Activated naive CD4-positive, alpha-beta T cell treated with anti-CD3 and anti-CD28 coated beads for 36 hours (primary cell): ENCODE measurements at regions of chr19 and their contacts with region 1.

Region 1: GRCh38 chr19:1020868-1021425 is at the start of gene TMEM259:
- DNase-seq: peak; percentile 98
- H3K4me3 Mint-ChIP-seq: peak within 1 kb of the TSS; percentile 95
- H3K27ac Mint-ChIP-seq: peak within 1 kb of the TSS; percentile 98
- H3K4me1 Mint-ChIP-seq: peaks cover 41% of the 10 kb centered on the region
- H3K27me3 Mint-ChIP-seq: no peaks in the 10 kb centered on the region
- total RNA-seq, gene TMEM259: 105 to 109 TPM

Region 2: DNA sequence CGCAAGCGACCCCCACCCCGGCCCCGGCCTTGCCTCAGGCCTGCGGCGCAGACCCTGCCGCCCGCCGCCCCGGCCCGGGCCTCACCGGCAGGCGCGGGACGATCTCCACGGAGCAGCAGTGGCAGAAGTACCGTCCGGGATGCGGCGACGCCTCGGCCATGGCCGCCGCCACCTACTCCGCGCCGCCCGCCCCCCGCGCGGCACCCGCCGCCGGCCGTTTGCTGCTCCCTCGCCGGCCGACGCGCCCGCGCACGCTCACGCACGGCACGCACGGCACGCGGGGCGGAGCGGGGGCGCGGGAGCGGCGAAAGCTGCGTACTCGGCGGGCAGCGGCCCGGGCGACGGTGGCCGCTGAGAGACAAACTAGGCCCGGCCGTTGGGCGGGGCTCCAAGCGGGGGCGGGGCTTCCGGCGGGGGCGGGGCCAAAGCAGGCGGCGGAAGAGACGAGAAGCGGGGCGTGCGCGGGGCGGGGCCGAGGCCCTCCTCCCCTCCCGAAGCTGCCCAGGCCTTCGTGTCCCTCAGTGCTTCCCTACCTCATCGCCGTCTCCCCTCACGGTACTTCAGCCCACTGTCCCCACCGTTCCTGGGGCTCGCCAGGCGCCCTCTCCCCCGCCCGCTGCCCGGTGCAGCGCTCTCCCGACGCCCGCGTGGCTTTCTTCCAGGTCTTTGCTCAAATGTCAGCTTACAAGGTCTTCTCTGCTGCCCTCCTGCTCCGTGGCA is 357.8 kb before region 1 on chr19 and contains the start of gene RNF126:
- CTCF ChIA-PET with region 1: no interaction called
- intact Hi-C with region 1: loop called (anchors 5 kb)
- DNase-seq: peak; percentile 95
- H3K4me3 Mint-ChIP-seq: peak within 1 kb of the TSS; percentile 99
- H3K27ac Mint-ChIP-seq: peak within 1 kb of the TSS; percentile 98
- H3K4me1 Mint-ChIP-seq: peaks cover 40% of the 10 kb centered on the region
- H3K27me3 Mint-ChIP-seq: no peaks in the 10 kb centered on the region
- total RNA-seq, gene RNF126: 99.5 to 108 TPM

Region 3: DNA sequence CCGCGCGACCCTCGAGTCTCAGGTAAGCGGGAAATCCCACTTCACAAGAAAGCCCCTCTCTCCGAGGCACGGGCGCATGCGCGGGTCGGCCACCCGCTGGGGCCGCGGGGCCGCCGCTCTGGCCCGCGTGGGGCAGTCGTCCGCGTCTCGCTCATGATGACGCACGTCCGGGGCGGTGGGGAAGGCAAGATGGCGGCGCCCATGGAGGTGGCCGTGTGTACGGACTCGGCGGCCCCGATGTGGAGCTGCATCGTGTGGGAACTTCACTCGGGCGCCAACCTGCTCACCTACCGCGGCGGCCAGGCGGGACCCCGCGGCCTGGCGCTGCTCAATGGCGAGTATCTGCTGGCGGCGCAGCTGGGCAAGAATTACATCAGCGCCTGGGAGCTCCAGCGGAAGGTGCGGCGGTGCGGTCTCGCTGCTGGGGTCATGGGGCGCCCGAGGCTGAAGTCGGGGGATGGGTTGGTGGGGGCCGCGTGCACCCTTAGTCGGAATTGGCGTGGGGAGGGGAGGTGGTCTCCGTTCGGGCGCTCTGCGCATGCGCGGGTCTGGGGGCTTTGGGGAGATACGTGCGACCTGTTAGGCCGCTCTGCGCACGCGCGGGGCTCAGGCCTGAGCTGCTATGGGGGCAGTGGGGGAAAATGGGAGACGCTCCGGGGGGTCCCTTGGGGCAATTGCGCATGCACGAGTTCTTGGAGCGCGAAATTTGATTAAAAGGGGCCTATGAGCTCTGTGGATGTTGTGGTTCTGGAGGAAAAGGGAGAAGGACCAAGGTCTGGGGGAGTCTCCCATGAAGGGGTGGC is 36.6 kb before region 1 on chr19 and contains the start of gene WDR18:
- CTCF ChIA-PET with region 1: no interaction called
- intact Hi-C with region 1: no loop called
- DNase-seq: peak; percentile 94
- H3K4me3 Mint-ChIP-seq: peak within 1 kb of the TSS; percentile 92
- H3K27ac Mint-ChIP-seq: peak within 1 kb of the TSS; percentile 91
- H3K4me1 Mint-ChIP-seq: peaks cover 21% of the 10 kb centered on the region
- H3K27me3 Mint-ChIP-seq: no peaks in the 10 kb centered on the region
- total RNA-seq, gene WDR18: 77.8 to 82.0 TPM

Region 4: GRCh38 chr19:1064661-1065605 is 44.0 kb after region 1 on chr19:
- CTCF ChIA-PET with region 1: interaction called, 3 read pairs
- intact Hi-C with region 1: loop called (anchors 2 kb)
- DNase-seq: peak; percentile 72
- H3K4me3 Mint-ChIP-seq: no peak overlapping the region
- H3K27ac Mint-ChIP-seq: no peak overlapping the region
- H3K4me1 Mint-ChIP-seq: peaks cover 30% of the 10 kb centered on the region
- H3K27me3 Mint-ChIP-seq: no peaks in the 10 kb centered on the region

Region 5: DNA sequence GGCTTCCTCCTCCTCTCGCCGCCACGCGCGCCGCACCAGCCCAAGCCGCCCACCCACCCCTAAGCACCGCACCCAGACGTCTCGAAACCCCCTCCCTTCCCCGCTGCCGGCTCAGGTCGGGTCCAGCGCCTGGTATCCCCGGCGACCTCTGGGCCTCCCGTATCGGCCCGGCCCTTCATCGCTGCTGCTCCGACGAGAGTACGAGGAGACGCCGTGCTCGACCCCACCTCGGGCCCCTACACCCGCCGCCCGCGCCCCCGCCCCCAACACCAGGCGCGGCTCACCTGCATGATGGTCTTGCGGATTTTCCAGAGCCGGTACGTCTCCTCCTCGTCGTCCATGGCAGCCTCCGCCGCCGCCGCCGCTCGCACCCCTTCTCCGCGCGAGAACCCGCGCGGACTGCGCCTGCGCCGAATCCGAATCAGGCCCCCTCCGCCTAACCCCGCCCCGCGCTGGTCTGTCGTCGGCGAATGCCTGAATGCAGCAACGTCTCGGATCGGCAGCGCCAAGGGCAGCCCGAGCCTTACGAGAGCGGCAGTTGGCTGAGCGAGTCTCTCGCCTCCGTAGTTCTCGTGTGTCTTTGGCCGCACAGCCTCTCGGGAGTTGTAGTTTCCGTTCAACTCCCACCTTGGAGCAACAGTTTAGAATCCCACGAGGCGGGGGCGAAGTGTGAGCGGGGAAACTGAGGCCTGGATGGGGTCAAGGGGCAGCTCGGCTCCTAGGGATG is 74.2 kb after region 1 on chr19 and contains the start of gene POLR2E:
- CTCF ChIA-PET with region 1: no interaction called
- intact Hi-C with region 1: loop called (anchors 1 kb)
- DNase-seq: peak; percentile 99
- H3K4me3 Mint-ChIP-seq: peak within 1 kb of the TSS; percentile 92
- H3K27ac Mint-ChIP-seq: peak within 1 kb of the TSS; percentile 92
- H3K4me1 Mint-ChIP-seq: peaks cover 65% of the 10 kb centered on the region
- H3K27me3 Mint-ChIP-seq: no peaks in the 10 kb centered on the region
- total RNA-seq, gene POLR2E: 238 to 258 TPM

Region 6: DNA sequence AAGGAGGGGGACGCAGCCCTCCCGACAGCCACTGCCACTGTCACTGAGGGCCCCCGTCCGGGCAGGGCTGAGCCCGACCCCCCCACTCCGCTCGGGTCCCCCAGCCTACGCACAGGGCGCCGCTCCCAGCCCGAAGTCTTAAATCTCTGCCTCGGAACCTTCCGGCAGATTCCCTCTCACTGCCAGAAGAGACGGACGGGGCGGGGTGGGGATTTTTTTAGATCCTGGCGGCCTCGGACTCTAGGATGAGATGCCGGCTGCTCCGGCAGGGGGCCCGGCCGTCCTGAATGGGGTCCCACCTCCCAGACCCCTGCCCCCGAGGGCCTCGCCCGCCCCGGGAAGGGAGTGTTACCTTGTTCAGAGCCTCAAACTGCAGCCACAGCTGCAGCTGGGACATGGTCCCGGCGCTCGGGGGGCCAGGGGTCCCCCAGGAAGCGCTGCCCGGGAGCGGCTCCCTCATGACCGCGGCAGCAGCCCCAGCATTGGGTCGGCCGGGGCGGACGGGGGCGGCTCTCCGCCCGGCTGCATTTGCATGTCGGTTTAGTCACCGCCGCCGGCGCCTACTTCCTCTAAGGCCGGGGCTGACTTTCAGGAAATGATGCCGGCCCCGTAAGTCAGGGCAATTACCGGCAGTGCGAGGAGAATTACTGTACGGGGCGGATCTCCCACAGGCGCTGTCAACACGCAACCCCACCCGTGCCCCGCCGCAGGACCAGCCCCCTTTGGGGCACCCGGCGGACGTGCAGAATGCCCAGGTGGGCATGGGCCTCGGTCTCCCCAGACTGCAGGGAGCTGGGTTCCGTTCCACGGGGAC is 111.0 kb after region 1 on chr19:
- CTCF ChIA-PET with region 1: no interaction called
- intact Hi-C with region 1: loop called (anchors 1 kb)
- DNase-seq: peak; percentile 97
- H3K4me3 Mint-ChIP-seq: peak overlapping the region; percentile 95
- H3K27ac Mint-ChIP-seq: peak overlapping the region; percentile 97
- H3K4me1 Mint-ChIP-seq: peaks cover 48% of the 10 kb centered on the region
- H3K27me3 Mint-ChIP-seq: no peaks in the 10 kb centered on the region

Region 7: DNA sequence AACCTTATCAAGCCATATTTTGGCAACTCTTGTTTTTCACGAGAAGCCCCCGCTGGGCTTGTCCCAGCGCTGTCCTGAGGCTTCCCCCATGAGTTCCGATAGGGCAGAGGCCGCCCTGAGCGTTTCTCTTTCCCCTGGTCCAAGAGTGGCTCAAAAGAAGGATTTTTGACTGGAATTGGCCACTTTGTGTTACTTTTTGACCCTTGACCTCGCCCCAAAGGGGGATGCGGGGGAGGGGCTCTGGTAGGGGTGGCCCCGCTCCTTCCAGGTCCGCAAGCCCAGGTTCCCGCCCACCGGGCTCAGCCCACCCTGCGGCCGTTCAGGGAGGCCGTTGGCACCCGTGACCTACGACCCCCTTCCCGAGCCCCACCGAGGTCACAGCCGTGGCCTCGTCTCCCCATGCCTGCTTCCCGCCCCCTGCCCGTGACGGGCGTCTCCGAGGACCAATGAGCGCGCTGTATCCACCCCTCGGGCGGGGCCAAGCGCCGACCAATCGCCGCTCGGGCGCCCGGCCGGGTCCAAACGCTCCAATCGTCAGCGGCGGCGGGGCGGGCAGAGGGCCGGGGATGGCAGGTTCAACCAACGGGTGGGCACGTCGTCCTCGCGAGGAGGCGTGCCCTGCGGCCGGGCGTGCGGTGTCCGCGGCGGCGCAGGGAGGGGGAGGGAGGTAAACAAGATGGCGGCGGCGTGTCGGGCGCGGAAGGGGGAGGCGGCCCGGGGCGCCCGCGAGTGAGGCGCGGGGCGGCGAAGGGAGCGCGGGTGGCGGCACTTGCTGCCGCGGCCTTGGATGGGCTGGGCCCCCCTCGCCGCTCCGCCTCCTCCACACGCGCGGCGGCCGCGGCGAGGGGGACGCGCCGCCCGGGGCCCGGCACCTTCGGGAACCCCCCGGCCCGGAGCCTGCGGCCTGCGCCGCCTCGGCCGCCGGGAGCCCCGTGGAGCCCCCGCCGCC is 184.4 kb after region 1 on chr19 and contains the start of gene STK11:
- CTCF ChIA-PET with region 1: no interaction called
- intact Hi-C with region 1: loop called (anchors 1 kb)
- DNase-seq: peak; percentile 99
- H3K4me3 Mint-ChIP-seq: peak within 1 kb of the TSS; percentile 93
- H3K27ac Mint-ChIP-seq: peak within 1 kb of the TSS; percentile 84
- H3K4me1 Mint-ChIP-seq: peaks cover 32% of the 10 kb centered on the region
- H3K27me3 Mint-ChIP-seq: no peaks in the 10 kb centered on the region
- total RNA-seq, gene STK11: 65.1 to 66.1 TPM

Region 8: DNA sequence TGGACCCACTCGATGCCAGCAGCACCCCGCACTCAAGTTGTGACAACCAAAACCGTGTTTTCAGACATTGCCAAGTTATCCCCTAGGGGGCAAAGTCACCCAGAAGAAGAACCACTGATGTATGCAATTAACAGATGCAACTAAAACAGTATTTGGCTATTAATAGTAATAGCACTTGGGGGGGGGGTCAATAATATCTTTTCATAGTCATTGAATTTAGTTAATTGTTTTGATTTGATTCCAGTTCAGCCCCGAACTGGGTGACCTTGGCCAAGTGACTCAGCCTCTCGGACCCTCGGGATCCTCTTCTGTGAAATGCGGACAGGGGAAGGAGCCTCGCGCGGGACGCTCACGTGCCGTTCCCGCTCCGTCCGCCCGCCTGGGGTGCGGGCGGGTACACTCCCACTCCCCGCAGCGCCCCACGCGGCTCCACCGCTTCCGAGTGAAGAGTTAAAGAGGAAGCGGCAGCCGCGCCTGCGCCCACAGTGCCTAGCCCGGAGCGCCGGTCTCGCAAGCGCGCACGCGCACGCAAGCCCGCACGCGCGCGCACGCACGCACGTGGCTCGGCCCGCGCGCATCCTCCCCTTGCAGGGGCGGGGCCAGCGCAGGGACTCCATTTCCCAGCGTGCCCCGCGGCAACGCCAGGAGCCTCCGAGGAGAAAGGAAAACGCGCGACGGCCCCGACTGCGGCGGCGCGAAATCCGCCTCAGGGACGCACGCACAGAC is 386.0 kb after region 1 on chr19:
- CTCF ChIA-PET with region 1: no interaction called
- intact Hi-C with region 1: loop called (anchors 10 kb)
- DNase-seq: peak; percentile 98
- H3K4me3 Mint-ChIP-seq: peak overlapping the region; percentile 69
- H3K27ac Mint-ChIP-seq: peak overlapping the region; percentile 81
- H3K4me1 Mint-ChIP-seq: peaks cover 43% of the 10 kb centered on the region
- H3K27me3 Mint-ChIP-seq: peaks cover 5% of the 10 kb centered on the region